Transverse colon (tissue), 4 donors: ENCODE measurements at regions of chr10 and their contacts with region 1.

Region 1: GRCh38 chr10:55033061-55033460 is 232.0 kb upstream of the PCDH15 start:
- DNase-seq: no peak
- H3K4me3 ChIP-seq: no peak overlapping the region
- H3K27ac ChIP-seq: no peak overlapping the region
- H3K4me1 ChIP-seq: no peaks in the 10 kb centered on the region
- H3K27me3 ChIP-seq: no peaks in the 10 kb centered on the region
- CTCF ChIP-seq: no peak
- EP300 ChIP-seq: no peak
- POLR2A ChIP-seq: no peak

Region 2: DNA sequence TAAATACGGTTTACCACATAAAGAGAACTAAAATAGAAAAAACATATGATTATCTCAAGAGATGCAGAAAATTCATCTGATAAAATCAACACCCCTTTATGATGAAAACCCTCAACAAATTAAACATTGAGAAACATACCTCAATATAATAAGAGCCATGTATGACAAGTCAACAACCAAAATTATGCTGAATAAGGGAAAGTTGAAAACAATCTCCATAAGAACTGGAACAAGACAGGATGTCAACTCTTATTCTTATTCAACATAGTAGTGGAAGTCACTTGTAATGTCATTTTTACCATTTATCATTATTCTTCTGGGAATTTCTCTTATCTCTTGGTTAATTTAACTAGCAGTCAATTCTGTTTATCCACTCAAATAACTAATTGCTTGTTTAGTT is 311.0 kb before region 1 on chr10:
- in situ Hi-C with region 1: no loop called
- intact Hi-C with region 1: no loop called
- DNase-seq: no peak
- H3K4me3 ChIP-seq: no peak overlapping the region
- H3K27ac ChIP-seq: no peak overlapping the region
- H3K4me1 ChIP-seq: no peaks in the 10 kb centered on the region
- H3K27me3 ChIP-seq: no peaks in the 10 kb centered on the region
- CTCF ChIP-seq: no peak
- EP300 ChIP-seq: no peak
- POLR2A ChIP-seq: no peak

Region 3: GRCh38 chr10:55867848-55868247 is 834.8 kb after region 1 on chr10:
- in situ Hi-C with region 1: no loop called
- intact Hi-C with region 1: loop called (anchors 5 kb)
- DNase-seq: no peak
- H3K4me3 ChIP-seq: no peak overlapping the region
- H3K27ac ChIP-seq: no peak overlapping the region
- H3K4me1 ChIP-seq: no peaks in the 10 kb centered on the region
- H3K27me3 ChIP-seq: no peaks in the 10 kb centered on the region
- CTCF ChIP-seq: no peak
- EP300 ChIP-seq: no peak
- POLR2A ChIP-seq: no peak